Common myeloid progenitor, CD34-positive (primary cell): ENCODE measurements at regions of chr14 and their contacts with region 1.

Region 1: GRCh38 chr14:104563742-104564615 is 15.6 kb upstream of the C14orf180 start:
- DNase-seq: peak; percentile 70 to 90 (median 90)
- H3K4me3 ChIP-seq: peak overlapping the region in 2 of 7 experiments; percentile 26 to 54
- H3K27ac ChIP-seq: no peak overlapping the region
- H3K4me1 ChIP-seq: peaks cover 0 to 14% (median 7%) of the 10 kb centered on the region in 4 experiments
- H3K27me3 ChIP-seq: peaks cover 0 to 34% (median 2%) of the 10 kb centered on the region in 5 experiments

Region 2: GRCh38 chr14:104094709-104095438 is 469.1 kb before region 1 on chr14:
- CTCF ChIA-PET with region 1: interaction called, 21 read pairs
- POLR2A ChIA-PET with region 1: no interaction called
- DNase-seq: peak; percentile 55 to 78 (median 71)
- H3K4me3 ChIP-seq: no peak overlapping the region
- H3K27ac ChIP-seq: no peak overlapping the region
- H3K4me1 ChIP-seq: peaks cover 0 to 5% (median 1%) of the 10 kb centered on the region in 4 experiments
- H3K27me3 ChIP-seq: no peaks in the 10 kb centered on the region

Region 3: GRCh38 chr14:104610749-104611310 is 46.9 kb after region 1 on chr14:
- CTCF ChIA-PET with region 1: no interaction called
- POLR2A ChIA-PET with region 1: no interaction called
- DNase-seq: no peak
- H3K4me3 ChIP-seq: no peak overlapping the region
- H3K27ac ChIP-seq: no peak overlapping the region
- H3K4me1 ChIP-seq: no peaks in the 10 kb centered on the region
- H3K27me3 ChIP-seq: peaks cover 7 to 59% (median 12%) of the 10 kb centered on the region in 5 experiments